Activated T-helper 1 cell treated with anti-CD3 and anti-CD28 coated beads, Interleukin-12 subunit alpha, Interleukin-12 subunit beta, Interleukin-2, Interleukin-4 antibody, amounts not matched to agents 30 ng/mL and 10 ng/mL and 1 ng/mL, durations not matched to agents 14 hours and 24 hours and 36 hours (primary cell): ENCODE measurements at regions of chr12 and their contacts with region 1.

Region 1: DNA sequence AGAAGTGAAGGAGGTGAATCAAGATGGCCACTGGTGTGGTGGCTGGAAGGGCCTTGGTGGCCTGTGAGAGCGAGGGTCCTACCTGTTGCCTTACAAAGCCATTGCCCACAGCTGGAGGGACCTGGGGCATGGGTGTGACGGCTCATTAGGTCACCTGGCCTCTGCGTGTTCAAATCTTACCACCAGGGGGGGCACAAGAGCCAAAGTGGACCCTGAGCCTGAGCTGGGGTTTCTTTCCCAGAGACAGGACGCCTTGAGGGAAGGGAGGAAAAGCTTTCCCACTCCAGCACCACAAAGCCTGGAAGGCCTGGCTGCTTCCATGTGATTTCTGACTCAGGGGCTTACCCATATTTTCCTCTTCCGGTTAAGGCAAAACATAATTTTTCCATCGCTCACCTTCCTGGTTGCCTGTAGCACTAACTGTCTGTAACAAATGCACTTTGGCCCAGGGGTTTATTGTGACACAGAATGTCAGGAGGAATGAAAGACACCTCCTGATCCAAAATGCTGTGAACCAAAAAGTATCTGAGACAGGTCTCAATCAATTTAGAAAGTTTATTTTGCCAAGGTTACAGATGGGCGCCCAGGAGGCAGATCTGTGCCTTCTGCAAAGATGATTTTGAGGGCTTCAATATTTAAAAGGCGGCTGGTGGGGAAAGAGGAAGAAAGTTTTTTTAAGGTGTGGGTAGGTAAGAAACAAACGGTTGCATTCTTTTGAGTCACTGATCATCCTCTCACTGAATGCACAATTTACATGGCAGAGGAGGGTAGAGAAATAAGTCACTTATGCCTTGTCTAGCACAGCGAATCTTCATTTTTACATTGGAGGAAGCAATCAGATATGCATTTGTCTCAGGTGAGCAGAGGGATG is 4.3 kb upstream of the CD9 start:
- DNase-seq: peak; percentile 61
- H3K4me3 Mint-ChIP-seq: no peak overlapping the region
- H3K27ac Mint-ChIP-seq: peak overlapping the region; percentile 32
- H3K4me1 Mint-ChIP-seq: peaks cover 26% of the 10 kb centered on the region
- H3K27me3 Mint-ChIP-seq: peaks cover 20% of the 10 kb centered on the region

Region 2: DNA sequence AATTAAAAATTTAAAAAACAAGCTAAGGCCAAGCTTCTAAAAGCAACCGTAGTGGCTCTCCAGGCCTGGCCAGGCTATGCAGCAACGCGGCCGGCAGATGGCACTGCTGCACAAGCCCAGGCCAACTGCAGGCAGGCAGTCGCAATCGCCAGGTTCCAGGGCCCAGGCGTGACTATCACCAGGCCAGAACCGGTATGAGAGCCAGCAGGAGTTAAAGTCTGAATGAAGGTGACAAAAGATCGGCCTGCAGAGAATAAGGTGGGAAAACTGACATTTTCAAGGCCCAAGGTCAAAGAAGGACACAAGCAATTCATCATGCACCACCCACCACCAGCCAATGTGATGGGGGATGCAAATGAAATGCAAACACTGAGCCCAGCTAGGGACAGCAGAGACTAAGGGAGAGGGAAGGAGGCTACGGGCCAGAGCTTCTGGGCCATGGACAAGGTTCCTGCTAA is 207.2 kb before region 1 on chr12:
- intact Hi-C with region 1: loop called (anchors 10 kb)
- DNase-seq: peak; percentile 55
- H3K4me3 Mint-ChIP-seq: no peak overlapping the region
- H3K27ac Mint-ChIP-seq: no peak overlapping the region
- H3K4me1 Mint-ChIP-seq: peaks cover 4% of the 10 kb centered on the region
- H3K27me3 Mint-ChIP-seq: peaks cover 6% of the 10 kb centered on the region

Region 3: DNA sequence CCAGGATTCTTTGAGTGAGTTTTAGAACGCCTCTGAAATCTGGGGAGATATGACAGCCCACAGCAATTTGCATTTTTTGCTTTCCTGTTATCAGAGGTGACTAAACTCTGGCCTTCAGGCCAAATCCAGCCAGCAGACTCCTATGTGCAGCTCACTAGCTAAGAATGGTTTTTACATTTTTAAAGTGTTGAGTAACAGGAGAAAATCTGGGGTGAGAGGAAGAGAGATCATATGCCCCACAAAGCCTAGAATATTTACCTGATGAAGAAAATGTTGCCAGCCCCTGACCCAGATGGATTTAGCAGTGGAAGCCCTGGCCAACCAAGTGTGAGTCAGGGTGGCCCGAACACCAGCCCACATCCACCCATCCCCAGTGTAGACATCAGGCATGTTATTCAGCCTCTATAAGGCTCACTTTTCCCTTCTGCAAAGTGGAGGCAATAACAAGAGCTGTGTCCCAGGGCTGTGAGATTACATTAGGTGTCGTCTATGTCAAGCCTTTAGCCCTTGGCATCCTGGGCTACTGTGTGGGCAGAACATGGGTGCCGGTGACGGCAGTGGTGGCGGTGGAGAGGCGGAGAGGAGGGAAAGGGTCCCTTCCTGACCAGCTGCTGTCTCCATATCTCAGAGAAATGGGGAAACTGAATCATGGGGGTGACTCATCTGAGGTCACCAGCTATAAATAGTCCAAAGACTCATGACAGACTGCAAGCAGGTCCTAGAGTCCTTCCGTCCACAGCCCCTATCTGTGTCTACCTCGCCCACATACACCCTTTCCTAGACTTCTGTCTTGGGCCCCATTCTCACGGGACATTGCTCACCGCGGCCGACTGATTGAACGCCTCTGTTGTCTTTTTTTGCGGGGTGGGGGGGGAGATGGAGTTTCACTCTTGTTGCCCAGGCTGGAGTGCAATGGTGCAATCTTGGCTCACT is 28.3 kb before region 1 on chr12:
- intact Hi-C with region 1: loop called (anchors 2 kb)
- DNase-seq: peak; percentile 35
- H3K4me3 Mint-ChIP-seq: peak overlapping the region; percentile 6
- H3K27ac Mint-ChIP-seq: peak overlapping the region; percentile 87
- H3K4me1 Mint-ChIP-seq: peaks cover 28% of the 10 kb centered on the region
- H3K27me3 Mint-ChIP-seq: no peaks in the 10 kb centered on the region

Region 4: GRCh38 chr12:6230321-6231110 is 34.6 kb after region 1 on chr12:
- intact Hi-C with region 1: loop called (anchors 2 kb)
- DNase-seq: peak; percentile 74
- H3K4me3 Mint-ChIP-seq: peak overlapping the region; percentile 58
- H3K27ac Mint-ChIP-seq: peak overlapping the region; percentile 92
- H3K4me1 Mint-ChIP-seq: peaks cover 20% of the 10 kb centered on the region
- H3K27me3 Mint-ChIP-seq: no peaks in the 10 kb centered on the region

Region 5: DNA sequence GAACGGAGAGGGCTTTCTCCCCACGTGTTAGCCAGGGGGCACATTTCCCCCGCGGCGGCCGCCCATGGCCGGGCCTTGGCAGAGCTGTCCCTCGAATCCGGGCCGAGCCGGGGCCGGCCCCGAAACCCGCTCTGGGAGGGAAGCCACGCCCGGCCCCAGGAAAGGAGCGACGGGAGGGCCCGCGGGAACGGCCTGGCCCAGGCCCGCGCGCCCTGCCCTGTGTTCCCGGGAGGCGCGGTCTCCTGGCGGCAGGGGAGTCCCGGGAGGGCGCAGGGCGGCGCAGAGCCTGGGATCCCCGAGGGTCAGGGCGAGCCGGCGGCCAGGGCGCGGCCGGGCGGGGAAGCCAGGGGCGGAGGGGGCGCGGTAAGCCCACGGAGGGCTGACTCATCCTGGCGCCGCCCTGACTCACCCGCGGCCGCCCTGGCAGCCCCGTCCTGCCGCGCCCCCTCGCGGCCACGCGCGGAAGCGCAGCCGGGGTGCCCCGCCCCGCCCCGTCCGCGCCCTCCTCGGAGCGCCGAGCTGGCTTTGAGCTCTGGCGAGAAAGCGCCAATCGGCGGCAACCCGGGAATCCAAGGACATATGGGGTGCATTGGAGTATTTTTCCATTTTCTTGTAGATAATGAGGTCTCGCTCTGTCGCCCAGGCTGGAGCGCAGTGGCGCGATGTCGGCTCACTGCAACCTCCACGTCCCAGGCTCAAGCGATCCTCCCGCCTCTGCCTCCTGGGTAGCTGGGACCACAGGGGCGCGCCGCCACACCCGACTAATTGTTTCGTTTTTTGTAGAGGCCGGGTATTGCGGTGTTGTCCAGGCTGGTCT is 82.7 kb after region 1 on chr12:
- intact Hi-C with region 1: loop called (anchors 1 kb)
- DNase-seq: peak; percentile 85
- H3K4me3 Mint-ChIP-seq: peak overlapping the region; percentile 83
- H3K27ac Mint-ChIP-seq: peak overlapping the region; percentile 88
- H3K4me1 Mint-ChIP-seq: peaks cover 8% of the 10 kb centered on the region
- H3K27me3 Mint-ChIP-seq: peaks cover 13% of the 10 kb centered on the region